Naive thymus-derived CD4-positive, alpha-beta T cell (primary cell): ENCODE measurements at regions of chr10 and their contacts with region 1.

Region 1: DNA sequence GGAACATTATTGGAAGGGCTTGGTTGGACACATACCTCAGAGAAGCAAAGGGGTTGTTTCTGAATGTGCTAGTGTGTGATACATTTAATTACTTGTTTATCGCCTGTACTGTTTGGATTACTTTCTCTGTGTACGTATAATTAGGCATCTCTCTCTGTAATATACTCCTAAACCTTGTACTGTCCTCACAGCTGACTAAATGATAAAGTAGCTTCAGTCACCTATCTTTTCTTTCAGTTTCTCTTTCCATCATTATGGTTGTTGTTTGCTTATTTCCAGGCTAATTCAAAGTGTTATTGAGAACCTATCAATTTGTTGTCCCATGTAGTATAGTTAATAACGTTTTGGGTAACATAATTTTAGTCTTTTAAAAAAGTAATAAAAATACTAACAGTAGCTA is 34.0 kb downstream of the MXI1 start:
- DNase-seq: no peak
- ATAC-seq: no peak
- H3K4me3 ChIP-seq: no peak overlapping the region
- H3K4me3 Mint-ChIP-seq: peak overlapping the region in 6 of 10 donors; percentile 2 to 46 (median 32)
- H3K27ac ChIP-seq: no peak overlapping the region
- H3K27ac Mint-ChIP-seq: peak overlapping the region in 1 of 9 donors; percentile 0
- H3K4me1 ChIP-seq: peaks cover 3 to 4% of the 10 kb centered on the region in 2 donors
- H3K4me1 Mint-ChIP-seq: peaks cover 18 to 58% (median 43%) of the 10 kb centered on the region in 7 donors
- H3K27me3 ChIP-seq: no peaks in the 10 kb centered on the region
- H3K27me3 Mint-ChIP-seq: peaks cover 0 to 38% (median 0%) of the 10 kb centered on the region in 5 donors

Region 2: DNA sequence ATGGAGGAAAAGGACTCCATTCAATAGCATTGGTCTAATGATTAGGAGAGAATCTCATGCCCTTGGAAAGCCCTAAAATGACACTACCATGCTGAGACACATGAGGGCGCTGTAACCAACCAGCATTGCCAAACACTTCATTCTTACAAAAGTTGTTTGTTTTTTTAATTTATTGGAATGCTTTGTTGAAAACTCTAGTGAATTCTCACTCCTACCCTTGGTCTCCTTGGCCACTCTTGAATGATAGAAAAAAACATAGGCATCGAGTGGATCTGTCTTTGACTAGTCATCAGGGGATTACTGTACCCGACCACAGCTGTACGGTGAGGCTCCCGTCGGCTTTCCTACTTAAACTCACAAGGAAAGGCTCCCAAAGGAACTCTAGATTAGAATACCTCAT is 262.9 kb before region 1 on chr10:
- CTCF ChIA-PET with region 1: no interaction called
- POLR2A ChIA-PET with region 1: no interaction called
- intact Hi-C with region 1: no loop called
- DNase-seq: peak; percentile 30 to 68 (median 51)
- ATAC-seq: peak; percentile 87
- H3K4me3 ChIP-seq: no peak overlapping the region
- H3K4me3 Mint-ChIP-seq: no peak overlapping the region
- H3K27ac ChIP-seq: no peak overlapping the region
- H3K27ac Mint-ChIP-seq: peak overlapping the region in 3 of 9 donors; percentile 25 to 44 (median 41)
- H3K4me1 ChIP-seq: no peaks in the 10 kb centered on the region
- H3K4me1 Mint-ChIP-seq: peaks cover 5 to 38% (median 19%) of the 10 kb centered on the region in 7 donors
- H3K27me3 ChIP-seq: no peaks in the 10 kb centered on the region
- H3K27me3 Mint-ChIP-seq: peaks cover 0 to 12% (median 0%) of the 10 kb centered on the region in 5 donors

Region 3: DNA sequence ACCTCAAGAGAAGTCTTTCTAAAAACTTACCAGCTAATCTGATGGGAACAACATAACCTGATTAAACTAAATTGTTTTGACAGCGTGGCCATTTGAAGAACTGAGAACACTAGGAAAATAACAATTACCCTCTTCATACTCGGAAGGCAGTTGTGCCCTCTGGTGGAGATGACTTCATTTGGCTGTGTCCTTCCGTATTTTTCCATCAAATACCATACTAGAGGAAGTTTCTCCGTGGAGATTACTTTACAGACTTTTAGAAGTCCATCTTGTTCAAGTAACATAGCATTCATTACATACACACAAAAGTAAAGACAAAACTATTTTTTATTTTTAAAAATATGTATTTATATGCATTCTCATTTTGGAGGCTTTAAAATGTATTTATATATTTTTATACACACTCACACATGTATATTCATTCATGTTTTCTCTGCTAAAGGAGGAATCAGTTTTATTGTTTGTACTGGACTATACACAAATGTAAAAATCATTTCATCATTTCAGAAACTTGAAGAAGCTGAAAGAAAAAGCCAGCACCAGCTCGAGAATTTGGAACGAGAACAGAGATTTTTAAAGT is 38.1 kb after region 1 on chr10:
- CTCF ChIA-PET with region 1: no interaction called
- POLR2A ChIA-PET with region 1: no interaction called
- intact Hi-C with region 1: loop called in 1 of 2 experiments (anchors 5 kb)
- DNase-seq: peak in 7 of 9 donors; percentile 37 to 61 (median 56)
- ATAC-seq: peak; percentile 82
- H3K4me3 ChIP-seq: no peak overlapping the region
- H3K4me3 Mint-ChIP-seq: peak overlapping the region in 5 of 10 donors; percentile 4 to 52 (median 48)
- H3K27ac ChIP-seq: no peak overlapping the region
- H3K27ac Mint-ChIP-seq: peak overlapping the region in 3 of 9 donors; percentile 8 to 59 (median 48)
- H3K4me1 ChIP-seq: peaks cover 0 to 6% of the 10 kb centered on the region in 2 donors
- H3K4me1 Mint-ChIP-seq: peaks cover 14 to 42% (median 21%) of the 10 kb centered on the region in 7 donors
- H3K27me3 ChIP-seq: no peaks in the 10 kb centered on the region
- H3K27me3 Mint-ChIP-seq: peaks cover 0 to 22% (median 0%) of the 10 kb centered on the region in 5 donors